MCF 10A (cell line): ENCODE measurements at regions of chr5 and their contacts with region 1.

Region 1: DNA sequence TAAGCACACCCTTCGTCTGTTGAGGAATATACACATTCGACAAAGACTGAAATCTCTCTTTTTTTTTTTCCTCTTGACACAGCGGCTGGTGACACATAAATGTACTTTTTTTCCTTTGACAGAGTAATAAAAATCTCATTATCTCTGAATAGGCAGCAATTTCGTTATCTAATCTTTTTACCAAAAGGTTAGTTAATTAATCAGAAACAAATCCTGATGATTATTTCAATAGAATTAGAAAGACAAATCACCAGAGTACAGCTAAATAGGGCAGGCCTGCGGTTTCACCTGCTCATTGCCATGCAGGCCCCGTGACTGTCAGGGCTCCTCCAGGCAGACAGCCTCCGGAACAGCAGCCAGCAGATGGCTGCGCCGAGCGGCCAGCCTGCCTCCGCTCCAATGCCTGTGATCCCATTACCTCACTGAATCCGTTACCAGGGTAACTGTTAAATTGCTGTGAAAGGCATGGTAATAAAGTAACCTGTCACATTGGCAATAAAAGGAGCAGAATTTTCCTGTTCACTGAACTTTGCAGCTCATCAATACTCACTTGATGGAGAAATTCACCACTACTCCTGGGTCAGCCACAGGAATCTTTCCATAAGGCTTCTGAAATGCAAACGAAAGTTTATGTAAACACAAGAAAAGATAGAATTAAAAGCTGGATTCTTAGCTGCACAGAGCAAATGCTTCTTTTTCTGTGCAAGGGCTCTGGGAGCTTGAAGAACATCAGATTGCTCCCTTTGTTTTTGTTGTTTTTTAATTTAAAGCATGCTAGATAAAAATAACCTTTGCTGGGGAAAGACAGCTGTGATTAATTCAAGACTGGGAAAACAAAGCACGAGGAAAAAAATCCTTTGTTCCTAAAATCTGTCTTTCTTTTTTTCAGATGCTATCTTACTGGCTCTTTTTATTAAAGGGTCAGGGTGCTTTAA is 666.4 kb upstream of the ZNF608 start:
- DNase-seq: peak; percentile 75
- H3K4me3 Mint-ChIP-seq: peak overlapping the region; percentile 44
- H3K27ac Mint-ChIP-seq: peak overlapping the region; percentile 91
- H3K4me1 Mint-ChIP-seq: peaks cover 52% of the 10 kb centered on the region
- H3K27me3 Mint-ChIP-seq: no peaks in the 10 kb centered on the region
- CTCF ChIP-seq: peak; percentile 34

Region 2: DNA sequence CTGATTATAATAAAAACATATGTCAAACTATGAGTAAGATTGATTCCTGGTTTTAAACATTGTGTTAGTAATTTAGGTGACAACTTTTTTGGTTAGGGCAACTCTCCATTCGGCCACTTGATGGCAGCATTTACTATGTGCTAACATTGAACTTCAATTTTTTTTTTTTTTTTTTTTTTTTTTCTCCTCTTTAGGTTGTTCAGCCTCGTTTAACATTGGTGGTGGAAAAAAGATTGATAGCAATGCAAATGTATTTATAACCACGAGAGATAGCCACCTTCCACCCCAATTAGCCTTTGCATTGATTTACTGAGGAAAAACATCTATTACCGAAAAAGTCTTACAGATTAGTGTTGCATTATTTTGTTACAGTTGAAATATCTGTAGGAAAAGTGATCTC is 1741.8 kb before region 1 on chr5:
- CTCF ChIA-PET with region 1: interaction called, 5 read pairs
- POLR2A ChIA-PET with region 1: no interaction called
- intact Hi-C with region 1: loop called (anchors 2 kb)
- DNase-seq: peak; percentile 75
- H3K4me3 Mint-ChIP-seq: no peak overlapping the region
- H3K27ac Mint-ChIP-seq: no peak overlapping the region
- H3K4me1 Mint-ChIP-seq: no peaks in the 10 kb centered on the region
- H3K27me3 Mint-ChIP-seq: no peaks in the 10 kb centered on the region
- CTCF ChIP-seq: peak; percentile 88

Region 3: DNA sequence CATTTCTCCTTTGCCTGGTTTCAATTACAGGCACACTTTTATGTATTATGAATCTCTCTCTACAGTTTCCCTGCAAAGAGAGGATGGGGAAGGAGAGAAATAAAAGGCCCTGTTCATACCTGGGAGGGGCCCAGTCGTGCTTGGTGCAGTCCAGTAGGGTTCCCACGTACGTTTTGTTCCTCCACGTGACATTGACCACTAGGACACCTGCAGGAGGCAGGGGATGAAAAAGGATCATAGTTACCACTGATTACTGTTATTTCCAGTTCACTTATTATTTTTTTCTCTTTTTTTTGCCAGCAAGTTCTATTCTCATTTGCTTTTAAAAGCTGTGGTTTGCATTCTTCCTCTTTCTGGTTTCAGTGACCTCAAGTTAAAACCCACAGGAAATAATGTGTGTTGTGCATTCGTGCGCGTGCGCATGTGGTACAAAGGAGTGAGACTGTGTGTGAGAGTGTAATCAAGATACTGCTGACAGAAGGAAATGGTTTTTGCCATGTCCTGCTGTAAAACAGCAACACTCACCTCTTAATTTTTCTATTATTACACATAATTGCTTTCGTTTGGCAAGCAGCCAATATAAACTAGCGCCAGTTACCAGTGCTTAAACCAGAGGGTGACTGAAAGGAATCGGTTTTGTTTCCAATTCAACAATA is 763.2 kb before region 1 on chr5:
- CTCF ChIA-PET with region 1: no interaction called
- POLR2A ChIA-PET with region 1: interaction called, 3 read pairs
- intact Hi-C with region 1: loop called (anchors 5 kb)
- DNase-seq: peak; percentile 73
- H3K4me3 Mint-ChIP-seq: peak overlapping the region; percentile 41
- H3K27ac Mint-ChIP-seq: peak overlapping the region; percentile 61
- H3K4me1 Mint-ChIP-seq: peaks cover 49% of the 10 kb centered on the region
- H3K27me3 Mint-ChIP-seq: no peaks in the 10 kb centered on the region
- CTCF ChIP-seq: no peak

Region 4: DNA sequence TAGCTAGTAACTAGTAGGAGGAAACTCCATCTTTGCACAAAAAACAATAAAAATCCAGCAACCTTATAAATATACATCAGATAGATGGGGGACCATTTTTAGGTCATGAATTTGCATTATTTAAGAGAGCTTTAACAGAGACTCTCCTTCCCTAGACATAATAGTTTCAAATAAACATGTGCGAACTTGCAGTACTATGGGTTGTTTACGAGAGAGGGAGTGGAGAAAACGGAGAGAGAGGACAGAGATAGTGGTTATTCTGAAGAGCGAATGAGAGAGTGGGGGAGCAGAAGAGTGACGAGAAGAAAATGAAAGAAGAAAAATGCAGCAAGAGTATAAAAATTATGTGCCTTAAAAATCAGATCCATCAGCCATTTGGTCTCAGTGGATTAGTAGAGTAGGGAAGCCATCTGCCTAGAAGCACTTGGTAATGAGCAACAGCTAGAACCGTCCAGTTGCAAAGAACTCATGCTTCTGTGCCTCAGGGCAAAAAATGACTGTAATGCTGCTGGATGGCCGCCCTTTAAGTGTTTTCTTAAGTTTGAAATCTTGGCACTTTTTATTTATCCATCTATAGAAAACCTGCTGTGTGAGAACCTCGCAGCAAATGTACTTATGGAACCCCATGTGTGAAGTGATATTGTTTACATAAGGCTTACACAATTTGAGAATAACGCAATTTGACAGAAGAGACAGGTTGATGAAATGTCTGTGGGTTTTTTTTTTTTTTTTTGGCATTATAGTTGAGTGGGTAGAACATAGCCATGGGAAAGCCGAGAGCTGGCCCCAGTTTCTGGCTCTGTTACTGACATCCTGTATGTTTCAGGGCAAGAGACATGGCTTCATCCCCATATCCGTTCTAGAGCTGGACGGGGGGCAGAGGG is 570.8 kb before region 1 on chr5:
- CTCF ChIA-PET with region 1: no interaction called
- POLR2A ChIA-PET with region 1: interaction called, 27 read pairs
- intact Hi-C with region 1: loop called (anchors 2 kb)
- DNase-seq: peak; percentile 100
- H3K4me3 Mint-ChIP-seq: peak overlapping the region; percentile 38
- H3K27ac Mint-ChIP-seq: peak overlapping the region; percentile 3
- H3K4me1 Mint-ChIP-seq: peaks cover 21% of the 10 kb centered on the region
- H3K27me3 Mint-ChIP-seq: no peaks in the 10 kb centered on the region
- CTCF ChIP-seq: no peak

Region 5: GRCh38 chr5:125006011-125006685 is 406.7 kb before region 1 on chr5:
- CTCF ChIA-PET with region 1: no interaction called
- POLR2A ChIA-PET with region 1: no interaction called
- intact Hi-C with region 1: no loop called
- DNase-seq: no peak
- H3K4me3 Mint-ChIP-seq: no peak overlapping the region
- H3K27ac Mint-ChIP-seq: no peak overlapping the region
- H3K4me1 Mint-ChIP-seq: no peaks in the 10 kb centered on the region
- H3K27me3 Mint-ChIP-seq: no peaks in the 10 kb centered on the region
- CTCF ChIP-seq: no peak

Region 6: GRCh38 chr5:125043781-125044391 is 368.9 kb before region 1 on chr5:
- CTCF ChIA-PET with region 1: no interaction called
- POLR2A ChIA-PET with region 1: no interaction called
- intact Hi-C with region 1: no loop called
- DNase-seq: peak; percentile 99
- H3K4me3 Mint-ChIP-seq: no peak overlapping the region
- H3K27ac Mint-ChIP-seq: peak overlapping the region; percentile 70
- H3K4me1 Mint-ChIP-seq: peaks cover 34% of the 10 kb centered on the region
- H3K27me3 Mint-ChIP-seq: no peaks in the 10 kb centered on the region
- CTCF ChIP-seq: no peak

Region 7: DNA sequence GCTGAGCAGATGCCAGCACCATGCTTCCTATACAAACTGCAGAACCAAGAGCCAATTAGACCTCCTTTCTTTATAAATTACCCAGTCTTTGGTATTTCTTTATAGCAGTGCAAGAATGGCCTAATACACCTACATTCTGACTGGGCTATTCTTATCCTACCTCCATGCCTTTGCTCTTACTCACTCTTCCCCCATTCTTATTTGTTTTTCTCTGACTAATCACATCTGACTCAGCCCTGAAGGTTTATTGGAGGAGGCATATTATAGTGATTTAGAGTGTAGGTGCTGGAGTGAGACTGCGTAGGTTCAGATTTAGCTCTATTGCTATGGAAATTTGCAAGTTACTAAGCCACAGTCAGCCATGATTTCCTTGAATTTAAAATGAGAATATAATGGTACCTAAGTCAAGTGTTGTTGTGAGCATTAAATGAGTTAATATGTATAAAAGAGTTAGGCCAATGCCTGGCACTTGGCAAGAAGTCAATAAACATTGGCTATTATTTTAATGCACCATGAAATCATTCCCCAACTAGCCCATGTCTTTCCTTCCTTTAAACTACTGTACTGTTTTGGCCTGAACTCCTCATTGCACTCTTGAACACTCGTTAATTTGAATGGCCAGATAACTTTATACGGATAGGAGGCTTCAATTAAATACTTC is 135.2 kb before region 1 on chr5:
- CTCF ChIA-PET with region 1: interaction called, 3 read pairs
- POLR2A ChIA-PET with region 1: interaction called, 17 read pairs
- intact Hi-C with region 1: loop called (anchors 2 kb)
- DNase-seq: peak; percentile 96
- H3K4me3 Mint-ChIP-seq: no peak overlapping the region
- H3K27ac Mint-ChIP-seq: peak overlapping the region; percentile 61
- H3K4me1 Mint-ChIP-seq: peaks cover 19% of the 10 kb centered on the region
- H3K27me3 Mint-ChIP-seq: no peaks in the 10 kb centered on the region
- CTCF ChIP-seq: no peak

Region 8: GRCh38 chr5:125559296-125559695 is 146.5 kb after region 1 on chr5:
- CTCF ChIA-PET with region 1: no interaction called
- POLR2A ChIA-PET with region 1: interaction called, 9 read pairs
- intact Hi-C with region 1: loop called (anchors 2 kb)
- DNase-seq: peak; percentile 88
- H3K4me3 Mint-ChIP-seq: peak overlapping the region; percentile 39
- H3K27ac Mint-ChIP-seq: peak overlapping the region; percentile 69
- H3K4me1 Mint-ChIP-seq: peaks cover 28% of the 10 kb centered on the region
- H3K27me3 Mint-ChIP-seq: no peaks in the 10 kb centered on the region
- CTCF ChIP-seq: no peak

Region 9: DNA sequence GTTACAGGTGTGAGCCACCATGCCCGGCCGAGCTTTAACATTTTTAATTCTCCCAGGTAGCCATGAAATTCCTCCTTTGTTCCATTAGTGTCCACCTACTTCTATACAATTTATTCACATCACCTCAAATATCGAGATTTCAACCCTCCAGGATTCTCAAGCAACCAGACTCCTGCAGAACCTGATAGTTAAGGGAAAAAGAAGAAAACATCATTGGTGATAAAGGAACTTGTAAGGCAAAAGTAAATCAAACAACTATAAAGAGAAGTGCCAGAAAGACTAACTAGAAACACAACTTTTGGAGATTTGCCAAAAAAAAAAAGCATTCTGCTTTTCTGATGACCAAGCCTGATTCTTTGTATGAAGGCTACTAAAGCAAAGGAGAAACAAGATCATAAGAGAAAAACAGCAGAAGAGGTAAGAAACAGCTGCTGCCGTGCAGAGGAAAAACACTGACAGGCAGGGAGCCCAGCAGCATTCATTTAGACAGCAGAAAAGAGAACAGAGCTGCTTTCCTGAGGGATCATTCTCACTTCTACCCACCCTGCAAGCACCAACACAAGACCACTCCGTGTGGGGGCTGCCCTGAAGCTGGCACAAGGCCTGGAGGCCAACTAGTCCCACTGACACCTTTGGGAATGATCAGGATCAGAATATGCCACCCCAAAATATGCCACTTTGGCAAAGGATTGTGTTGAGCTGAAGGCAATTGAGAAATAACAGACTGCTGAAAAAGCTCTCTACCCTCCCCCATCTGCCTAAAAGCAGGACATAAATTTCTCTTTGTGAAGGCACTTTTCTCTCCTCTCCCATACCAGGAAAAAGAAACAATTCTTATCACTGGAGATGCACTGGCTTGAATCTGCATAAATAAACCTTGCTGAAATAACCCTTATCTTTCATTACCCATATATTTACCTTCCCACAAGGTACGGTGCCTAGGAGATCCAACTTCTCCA is 1107.1 kb after region 1 on chr5:
- CTCF ChIA-PET with region 1: no interaction called
- POLR2A ChIA-PET with region 1: no interaction called
- intact Hi-C with region 1: loop called (anchors 5 kb)
- DNase-seq: no peak
- H3K4me3 Mint-ChIP-seq: no peak overlapping the region
- H3K27ac Mint-ChIP-seq: peak overlapping the region; percentile 68
- H3K4me1 Mint-ChIP-seq: peaks cover 26% of the 10 kb centered on the region
- H3K27me3 Mint-ChIP-seq: no peaks in the 10 kb centered on the region
- CTCF ChIP-seq: no peak